Activated B cell treated with CpG ODN at 0.5 μM for 24 hours (primary cell): ENCODE measurements at regions of chr10 and their contacts with region 1.

Region 1: DNA sequence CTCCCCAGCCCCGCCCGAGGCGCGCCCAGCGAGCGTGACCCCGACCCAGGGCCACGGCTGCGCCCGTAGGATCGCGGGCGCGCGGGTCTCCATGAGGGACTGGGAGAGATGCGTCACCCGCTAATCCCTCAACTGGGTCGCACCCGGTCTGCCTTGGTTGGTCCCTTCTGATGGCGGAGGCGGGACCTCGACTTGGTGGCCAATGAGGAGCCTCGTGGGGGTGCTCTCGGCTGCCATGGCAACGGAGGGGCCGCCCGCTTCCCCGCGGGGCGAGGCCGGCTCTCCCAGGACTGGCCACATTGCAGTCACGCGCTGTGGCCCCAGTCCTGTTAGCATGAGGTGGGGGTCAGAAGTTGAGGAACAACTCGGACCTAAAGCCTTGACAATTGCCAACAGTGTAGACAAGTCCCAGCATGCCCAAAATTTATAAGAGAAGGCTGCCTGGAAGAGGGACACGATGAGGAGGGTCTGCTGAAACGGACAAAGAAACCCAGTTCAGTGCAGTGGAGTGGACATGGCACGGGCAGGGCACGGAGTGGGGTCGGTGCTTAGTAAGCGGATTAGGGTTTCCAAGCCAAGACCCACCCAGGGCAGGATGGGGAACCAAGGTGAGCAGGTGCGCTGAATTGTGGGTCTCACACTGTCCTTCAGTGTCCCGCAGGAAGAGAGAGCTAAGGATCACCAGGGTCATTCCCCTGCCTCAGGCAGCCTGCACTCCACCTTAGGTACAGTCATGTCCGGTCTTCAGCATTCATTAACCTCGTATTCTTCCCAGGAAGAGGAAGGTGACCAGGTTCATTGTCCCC is 24.4 kb downstream of the DDIT4 start:
- DNase-seq: peak; percentile 89
- ATAC-seq: peak; percentile 72
- H3K4me3 Mint-ChIP-seq: peak overlapping the region; percentile 86
- H3K27ac Mint-ChIP-seq: peak overlapping the region; percentile 100
- H3K4me1 Mint-ChIP-seq: peaks cover 73% of the 10 kb centered on the region
- H3K27me3 Mint-ChIP-seq: no peaks in the 10 kb centered on the region
- CTCF ChIP-seq: no peak

Region 2: DNA sequence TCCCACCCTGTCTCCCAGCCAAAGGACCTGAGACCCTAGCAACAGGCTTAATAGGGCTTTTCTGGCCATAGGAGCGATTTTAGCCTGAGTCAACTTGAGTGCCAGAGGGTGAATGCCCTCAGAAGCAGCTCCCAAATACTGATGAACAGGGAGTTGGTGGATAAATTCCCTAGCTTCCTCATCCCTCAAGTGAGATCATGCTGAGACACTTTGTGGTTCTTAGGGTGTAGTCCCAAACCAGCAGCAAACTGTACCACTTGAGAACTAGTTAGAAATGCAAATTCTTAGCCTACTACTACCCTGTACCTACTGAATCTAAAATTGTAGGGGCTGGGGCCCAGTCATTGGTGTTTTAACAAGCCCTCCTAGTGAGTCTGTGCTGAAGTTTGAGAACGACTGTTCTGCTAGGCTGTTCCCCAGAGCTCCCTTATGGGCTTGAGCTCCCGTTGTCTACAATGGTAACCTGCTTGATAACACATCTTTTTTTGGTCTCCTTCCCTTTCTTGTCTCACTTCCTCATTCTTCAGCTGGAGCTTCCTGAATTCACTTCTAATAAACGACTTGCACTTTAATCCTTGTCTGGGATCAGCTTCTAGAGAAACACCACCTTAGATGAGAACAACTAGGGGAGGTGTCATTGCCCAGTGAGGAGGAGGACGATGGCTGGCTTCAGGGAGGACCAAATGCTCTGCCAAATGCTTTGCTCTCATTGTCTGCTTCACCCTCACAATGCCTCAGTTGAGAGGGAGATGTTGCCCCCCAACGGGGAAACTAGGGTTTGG is 919.6 kb before region 1 on chr10:
- CTCF ChIA-PET with region 1: no interaction called
- POLR2A ChIA-PET with region 1: interaction called, 12 read pairs
- intact Hi-C with region 1: no loop called
- DNase-seq: no peak
- ATAC-seq: peak; percentile 20
- H3K4me3 Mint-ChIP-seq: peak overlapping the region; percentile 24
- H3K27ac Mint-ChIP-seq: peak overlapping the region; percentile 67
- H3K4me1 Mint-ChIP-seq: peaks cover 40% of the 10 kb centered on the region
- H3K27me3 Mint-ChIP-seq: no peaks in the 10 kb centered on the region
- CTCF ChIP-seq: no peak

Region 3: DNA sequence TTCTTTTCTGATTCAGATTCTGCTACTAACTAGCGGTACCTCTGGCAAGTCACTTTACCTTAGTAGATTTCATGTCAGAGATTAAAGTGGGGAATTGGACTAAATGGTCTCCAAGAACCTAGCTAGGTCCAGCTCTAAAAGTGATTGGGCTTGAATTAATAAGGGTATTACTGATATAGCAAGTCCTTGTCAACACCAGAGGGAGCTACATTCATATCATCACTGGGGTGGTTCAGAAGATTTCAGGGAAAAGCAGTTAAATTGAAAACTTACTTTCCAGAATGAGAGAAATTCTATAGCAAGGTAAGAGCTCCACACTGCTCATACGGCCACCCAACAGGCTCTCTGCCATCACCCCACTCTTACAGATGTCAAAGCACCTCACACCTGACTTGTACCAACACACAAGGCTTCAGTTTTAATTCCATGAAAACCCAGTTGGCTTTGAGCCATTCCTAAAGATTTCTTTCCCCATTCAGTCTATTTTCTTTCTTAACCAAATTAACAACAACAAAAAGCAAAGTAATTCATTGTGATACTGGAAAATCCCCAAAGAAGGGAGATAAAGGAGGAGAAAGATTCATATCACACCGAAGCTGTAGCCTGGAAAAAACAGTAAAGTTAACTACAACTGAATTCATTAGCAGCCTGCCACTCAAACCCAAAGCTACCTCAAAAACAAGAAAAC is 171.8 kb before region 1 on chr10:
- CTCF ChIA-PET with region 1: no interaction called
- POLR2A ChIA-PET with region 1: interaction called, 13 read pairs
- intact Hi-C with region 1: no loop called
- DNase-seq: no peak
- ATAC-seq: no peak
- H3K4me3 Mint-ChIP-seq: no peak overlapping the region
- H3K27ac Mint-ChIP-seq: peak overlapping the region; percentile 42
- H3K4me1 Mint-ChIP-seq: peaks cover 2% of the 10 kb centered on the region
- H3K27me3 Mint-ChIP-seq: no peaks in the 10 kb centered on the region
- CTCF ChIP-seq: no peak

Region 4: GRCh38 chr10:72248468-72249151 is 49.6 kb before region 1 on chr10:
- CTCF ChIA-PET with region 1: no interaction called
- POLR2A ChIA-PET with region 1: interaction called, 84 read pairs
- intact Hi-C with region 1: loop called (anchors 1 kb)
- DNase-seq: peak; percentile 54
- ATAC-seq: peak; percentile 78
- H3K4me3 Mint-ChIP-seq: peak overlapping the region; percentile 74
- H3K27ac Mint-ChIP-seq: peak overlapping the region; percentile 97
- H3K4me1 Mint-ChIP-seq: peaks cover 85% of the 10 kb centered on the region
- H3K27me3 Mint-ChIP-seq: no peaks in the 10 kb centered on the region
- CTCF ChIP-seq: no peak

Region 5: GRCh38 chr10:72273410-72274212 is 24.6 kb before region 1 on chr10 and contains the start of gene DDIT4:
- CTCF ChIA-PET with region 1: interaction called, 21 read pairs
- POLR2A ChIA-PET with region 1: interaction called, 377 read pairs
- intact Hi-C with region 1: loop called (anchors 1 kb)
- DNase-seq: peak; percentile 95
- ATAC-seq: peak; percentile 93
- H3K4me3 Mint-ChIP-seq: peak within 1 kb of the TSS; percentile 98
- H3K27ac Mint-ChIP-seq: peak within 1 kb of the TSS; percentile 94
- H3K4me1 Mint-ChIP-seq: peaks cover 40% of the 10 kb centered on the region
- H3K27me3 Mint-ChIP-seq: no peaks in the 10 kb centered on the region
- CTCF ChIP-seq: no peak
- total RNA-seq, gene DDIT4: 175 and 180 TPM in 2 replicates

Region 6: GRCh38 chr10:72308320-72308987 is 10.3 kb after region 1 on chr10:
- CTCF ChIA-PET with region 1: interaction called, 3 read pairs
- POLR2A ChIA-PET with region 1: interaction called, 1,996 read pairs
- intact Hi-C with region 1: loop called (anchors 1 kb)
- DNase-seq: no peak
- ATAC-seq: peak; percentile 27
- H3K4me3 Mint-ChIP-seq: no peak overlapping the region
- H3K27ac Mint-ChIP-seq: peak overlapping the region; percentile 50
- H3K4me1 Mint-ChIP-seq: peaks cover 60% of the 10 kb centered on the region
- H3K27me3 Mint-ChIP-seq: no peaks in the 10 kb centered on the region
- CTCF ChIP-seq: no peak